Left colon (tissue), 2 donors: ENCODE measurements at regions of chr11 and their contacts with region 1.

Region 1: GRCh38 chr11:74615311-74615710 is 22.9 kb downstream of the POLD3 start:
- DNase-seq: no peak
- ATAC-seq: no peak

Region 2: DNA sequence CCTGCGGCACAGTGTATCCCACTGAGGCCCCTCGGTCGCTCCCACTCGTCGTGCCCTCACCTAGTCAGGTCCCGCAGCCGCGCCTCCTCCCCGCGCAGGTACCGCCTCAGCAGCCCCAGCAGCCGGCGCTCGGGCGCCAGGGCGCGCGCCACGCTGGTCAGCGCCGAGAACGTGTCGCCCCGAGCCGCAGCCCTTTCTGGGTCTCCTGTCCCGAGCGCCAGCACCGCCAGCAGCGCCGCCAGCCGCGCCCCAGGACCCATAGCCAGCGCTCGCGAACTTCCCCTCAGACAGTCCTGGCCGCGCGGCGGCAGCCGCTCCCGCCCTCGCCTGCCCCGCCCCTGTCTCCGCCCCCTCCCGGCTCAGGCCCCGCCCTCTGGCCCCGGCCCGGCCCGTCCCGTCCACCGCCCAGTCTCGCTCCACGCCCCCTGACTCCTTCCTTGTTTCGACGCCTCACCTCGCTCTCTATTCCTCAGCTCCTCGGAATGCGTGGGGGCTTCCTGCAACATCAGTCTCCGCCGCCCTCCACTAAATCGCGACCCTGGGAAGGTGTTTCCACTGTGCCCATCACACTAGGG is 303.9 kb before region 1 on chr11 and contains the start of gene P4HA3:
- intact Hi-C with region 1: no loop called
- DNase-seq: peak; percentile 53 to 78
- ATAC-seq: peak; percentile 99
- total RNA-seq, gene P4HA3: 0.25 to 0.27 TPM

Region 3: GRCh38 chr11:74683279-74683871 is 68.1 kb after region 1 on chr11:
- intact Hi-C with region 1: no loop called
- DNase-seq: peak; percentile 25 to 30
- ATAC-seq: peak; percentile 72

Region 4: DNA sequence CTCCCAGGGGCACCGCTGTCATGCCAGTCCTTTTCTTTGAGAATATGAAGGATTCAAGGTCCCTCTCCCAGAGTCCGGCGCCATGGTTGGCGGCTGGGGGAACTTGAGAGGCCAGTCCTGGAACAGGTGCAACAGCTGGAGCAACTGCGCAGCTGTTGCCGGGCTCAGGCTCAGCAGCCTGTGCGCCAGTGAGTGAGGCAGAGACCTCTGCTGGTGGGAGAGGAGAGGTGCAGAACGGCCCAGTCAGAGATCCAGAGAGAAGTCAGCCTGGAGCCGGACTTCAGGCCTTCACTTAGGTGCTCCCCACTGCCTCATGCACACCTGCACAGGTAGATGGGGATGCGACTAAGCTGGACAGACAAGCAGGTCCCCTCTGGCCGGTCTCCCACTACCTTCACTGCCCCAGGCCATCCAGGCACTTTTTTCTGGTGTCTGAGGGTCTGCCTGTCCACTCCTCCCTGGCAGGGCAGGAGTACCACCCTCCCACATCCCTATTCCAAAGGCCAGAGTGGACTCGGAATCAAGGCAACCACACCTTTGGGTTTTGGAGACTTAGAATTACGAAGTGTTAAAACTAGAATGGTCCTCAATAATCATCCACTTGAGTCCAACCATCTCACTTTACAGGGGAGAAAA is 111.4 kb after region 1 on chr11:
- intact Hi-C with region 1: loop called in 1 of 2 experiments (anchors 5 kb)
- DNase-seq: peak; percentile 70 to 72
- ATAC-seq: peak; percentile 98